Vagina (tissue), 2 donors: ENCODE measurements at regions of chr17 and their contacts with region 1.

Region 1: GRCh38 chr17:6427279-6427781 is 7.6 kb downstream of the AIPL1 start:
- DNase-seq: no peak
- H3K4me3 ChIP-seq: no peak overlapping the region
- H3K27ac ChIP-seq: no peak overlapping the region
- H3K4me1 ChIP-seq: no peaks in the 10 kb centered on the region
- H3K27me3 ChIP-seq: no peaks in the 10 kb centered on the region
- CTCF ChIP-seq: no peak
- POLR2A ChIP-seq: no peak

Region 2: GRCh38 chr17:5584383-5585286 is 842.7 kb before region 1 on chr17 and contains the start of gene NLRP1:
- intact Hi-C with region 1: loop called (anchors 5 kb)
- DNase-seq: peak in 1 of 2 donors; percentile 98
- H3K4me3 ChIP-seq: peak within 1 kb of the TSS; percentile 68 to 72
- H3K27ac ChIP-seq: peak within 1 kb of the TSS; percentile 96
- H3K4me1 ChIP-seq: peaks cover 46% of the 10 kb centered on the region
- H3K27me3 ChIP-seq: no peaks in the 10 kb centered on the region
- CTCF ChIP-seq: no peak
- POLR2A ChIP-seq: peak in 1 of 2 donors; percentile 77
- total RNA-seq, gene NLRP1: 83.7 TPM

Region 3: DNA sequence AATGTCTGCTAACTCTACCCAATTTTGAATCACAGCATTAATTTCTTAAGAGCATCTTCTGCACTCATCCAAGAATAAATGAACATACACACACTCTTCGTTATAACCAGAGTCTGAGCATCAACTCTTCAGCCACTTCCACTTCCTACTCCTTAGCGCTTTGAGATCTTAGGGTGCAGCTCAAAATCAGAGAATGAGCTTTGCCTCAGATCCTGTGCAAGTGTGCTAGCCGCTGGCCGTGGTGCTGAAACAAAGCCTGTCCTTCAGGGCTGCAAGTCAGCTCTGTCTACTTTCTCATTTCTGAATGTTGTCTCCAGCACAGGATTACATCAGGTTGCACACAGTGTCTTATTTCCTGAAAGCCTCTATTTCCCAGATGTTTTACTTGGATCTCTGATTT is 157.9 kb before region 1 on chr17:
- intact Hi-C with region 1: no loop called
- DNase-seq: no peak
- H3K4me3 ChIP-seq: no peak overlapping the region
- H3K27ac ChIP-seq: no peak overlapping the region
- H3K4me1 ChIP-seq: no peaks in the 10 kb centered on the region
- H3K27me3 ChIP-seq: no peaks in the 10 kb centered on the region
- CTCF ChIP-seq: no peak
- POLR2A ChIP-seq: no peak